CD8-positive, alpha-beta T cell (primary cell): ENCODE measurements at regions of chr19 and their contacts with region 1.

Region 1: DNA sequence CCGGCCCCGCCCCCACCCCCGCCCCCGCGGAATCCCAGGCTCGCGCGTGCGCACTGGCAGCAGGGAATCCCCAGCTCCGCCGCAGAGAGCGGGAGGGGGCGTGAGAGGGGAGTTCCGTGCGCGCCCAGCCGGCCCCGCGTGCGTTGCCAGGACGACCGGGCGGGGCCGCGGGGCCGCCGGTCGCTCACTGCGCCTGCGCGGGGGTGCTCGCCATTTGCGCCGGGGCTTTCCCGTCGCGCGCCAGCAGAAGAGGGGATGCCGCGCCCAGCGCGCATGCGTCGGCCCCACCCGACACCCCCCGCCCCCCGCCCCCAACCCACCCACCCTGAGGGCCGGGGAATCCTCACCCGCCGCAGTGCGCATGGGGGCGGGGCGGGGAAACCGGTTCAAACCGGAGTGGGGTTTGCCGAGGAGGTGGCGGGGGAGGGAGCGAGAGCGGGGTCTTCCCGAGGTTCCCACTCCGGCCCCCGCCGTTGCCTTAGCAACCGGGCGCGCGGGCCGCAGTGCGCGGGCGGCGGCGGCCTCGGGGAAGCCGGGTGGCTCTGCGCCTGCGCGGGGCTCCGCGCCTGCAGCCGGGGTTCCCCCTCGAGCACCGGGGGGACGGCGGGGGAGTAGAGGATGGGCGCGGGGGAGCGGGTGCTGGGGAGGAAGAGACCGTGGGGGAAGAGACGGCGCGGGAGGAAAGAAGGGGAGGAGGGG is 15.1 kb downstream of the CCDC124 start:
- DNase-seq: peak; percentile 88 to 99 (median 95)
- ATAC-seq: peak; percentile 66
- H3K4me3 ChIP-seq: peak overlapping the region; percentile 35 to 57
- H3K4me3 Mint-ChIP-seq: peak overlapping the region; percentile 74
- H3K27ac ChIP-seq: peak overlapping the region; percentile 44 to 93
- H3K27ac Mint-ChIP-seq: no peak overlapping the region
- H3K4me1 ChIP-seq: peaks cover 53% of the 10 kb centered on the region
- H3K4me1 Mint-ChIP-seq: peaks cover 49% of the 10 kb centered on the region
- H3K27me3 ChIP-seq: peaks cover 39% of the 10 kb centered on the region in 2 experiments
- H3K27me3 Mint-ChIP-seq: peaks cover 30% of the 10 kb centered on the region
- CTCF ChIP-seq: no peak

Region 2: GRCh38 chr19:17902701-17903100 is 45.3 kb before region 1 on chr19:
- CTCF ChIA-PET with region 1: no interaction called
- POLR2A ChIA-PET with region 1: no interaction called
- intact Hi-C with region 1: no loop called
- DNase-seq: no peak
- ATAC-seq: no peak
- H3K4me3 ChIP-seq: no peak overlapping the region
- H3K4me3 Mint-ChIP-seq: no peak overlapping the region
- H3K27ac ChIP-seq: no peak overlapping the region
- H3K27ac Mint-ChIP-seq: no peak overlapping the region
- H3K4me1 ChIP-seq: no peaks in the 10 kb centered on the region
- H3K4me1 Mint-ChIP-seq: no peaks in the 10 kb centered on the region
- H3K27me3 ChIP-seq: peaks cover 0 to 7% of the 10 kb centered on the region in 2 experiments
- H3K27me3 Mint-ChIP-seq: peaks cover 18% of the 10 kb centered on the region
- CTCF ChIP-seq: no peak

Region 3: GRCh38 chr19:18192673-18193387 is 244.9 kb after region 1 on chr19 and contains the start of gene MPV17L2:
- CTCF ChIA-PET with region 1: no interaction called
- POLR2A ChIA-PET with region 1: no interaction called
- intact Hi-C with region 1: loop called in 1 of 2 experiments (anchors 5 kb)
- DNase-seq: peak; percentile 95 to 100 (median 97)
- ATAC-seq: peak; percentile 84
- H3K4me3 ChIP-seq: peak within 1 kb of the TSS; percentile 73
- H3K4me3 Mint-ChIP-seq: peak within 1 kb of the TSS; percentile 87
- H3K27ac ChIP-seq: peak within 1 kb of the TSS; percentile 64 to 82
- H3K27ac Mint-ChIP-seq: peak within 1 kb of the TSS; percentile 90
- H3K4me1 ChIP-seq: peaks cover 18% of the 10 kb centered on the region
- H3K4me1 Mint-ChIP-seq: peaks cover 22% of the 10 kb centered on the region
- H3K27me3 ChIP-seq: no peaks in the 10 kb centered on the region
- H3K27me3 Mint-ChIP-seq: no peaks in the 10 kb centered on the region
- CTCF ChIP-seq: no peak
- total RNA-seq, gene MPV17L2: 4.0 to 5.2 TPM